Cardiac septum (tissue), 1 donor: ENCODE measurements at regions of chr4 and their contacts with region 1.

Region 1: GRCh38 chr4:3945511-3946290 is 179.5 kb downstream of the ADRA2C start:
- DNase-seq: no peak

Region 2: DNA sequence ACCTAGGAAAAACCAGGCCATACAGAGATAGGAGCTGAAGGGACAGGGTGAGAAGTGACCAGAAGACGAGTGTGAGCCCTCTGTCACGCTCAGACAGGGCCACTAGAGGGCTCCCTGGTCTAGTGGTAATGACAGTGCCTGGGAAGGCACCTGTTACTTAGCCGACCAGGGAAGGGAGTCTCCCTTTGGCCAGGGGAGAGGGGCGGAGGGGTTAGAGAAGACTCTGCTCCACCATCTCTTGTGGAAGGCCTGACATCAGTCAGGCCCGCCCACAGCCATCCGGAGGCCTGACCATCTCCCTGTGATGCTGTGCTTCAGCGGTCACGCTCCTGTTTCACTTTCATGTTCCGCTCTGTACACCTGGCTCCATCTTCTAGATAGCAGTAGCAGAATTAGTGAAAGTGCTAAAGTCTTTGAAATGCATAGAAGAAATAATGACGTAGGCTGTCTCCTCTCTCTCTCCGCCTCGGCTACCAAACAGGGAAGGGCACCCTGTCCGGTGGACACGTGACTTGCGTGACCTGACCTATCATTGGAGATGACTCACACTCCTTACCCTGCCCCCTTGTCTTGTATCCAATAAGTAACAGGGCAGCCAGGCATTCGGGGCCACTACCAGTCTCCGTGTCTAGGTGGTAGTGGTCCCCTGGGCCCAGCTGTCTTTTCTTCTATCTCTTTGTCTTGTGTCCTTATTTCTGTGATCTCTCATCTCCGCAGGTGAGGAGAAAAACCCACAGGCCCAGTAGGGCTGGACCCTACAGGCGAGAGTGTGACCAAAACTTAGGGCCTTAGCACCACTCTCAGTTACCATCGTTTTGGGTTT is 898.0 kb before region 1 on chr4:
- intact Hi-C with region 1: no loop called
- DNase-seq: peak; percentile 86

Region 3: DNA sequence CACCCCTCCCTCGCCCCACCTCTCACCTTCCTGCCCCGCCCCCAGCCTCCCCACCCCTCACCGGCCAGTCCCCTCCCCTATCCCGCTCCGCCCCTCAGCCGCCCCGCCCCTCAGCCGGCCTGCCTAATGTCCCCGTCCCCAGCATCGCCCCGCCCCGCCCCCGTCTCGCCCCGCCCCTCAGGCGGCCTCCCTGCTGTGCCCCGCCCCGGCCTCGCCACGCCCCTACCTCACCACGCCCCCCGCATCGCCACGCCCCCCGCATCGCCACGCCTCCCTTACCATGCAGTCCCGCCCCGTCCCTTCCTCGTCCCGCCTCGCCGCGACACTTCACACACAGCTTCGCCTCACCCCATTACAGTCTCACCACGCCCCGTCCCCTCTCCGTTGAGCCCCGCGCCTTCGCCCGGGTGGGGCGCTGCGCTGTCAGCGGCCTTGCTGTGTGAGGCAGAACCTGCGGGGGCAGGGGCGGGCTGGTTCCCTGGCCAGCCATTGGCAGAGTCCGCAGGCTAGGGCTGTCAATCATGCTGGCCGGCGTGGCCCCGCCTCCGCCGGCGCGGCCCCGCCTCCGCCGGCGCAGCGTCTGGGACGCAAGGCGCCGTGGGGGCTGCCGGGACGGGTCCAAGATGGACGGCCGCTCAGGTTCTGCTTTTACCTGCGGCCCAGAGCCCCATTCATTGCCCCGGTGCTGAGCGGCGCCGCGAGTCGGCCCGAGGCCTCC is 871.5 kb before region 1 on chr4 and contains the starts of genes HTT and HTT-AS:
- intact Hi-C with region 1: loop called (anchors 10 kb)
- DNase-seq: peak; percentile 99
- total RNA-seq, gene HTT: 35.1 TPM
- total RNA-seq, gene HTT-AS: not detected

Region 4: GRCh38 chr4:4762909-4763821 is 817.5 kb after region 1 on chr4:
- intact Hi-C with region 1: no loop called
- DNase-seq: peak; percentile 29